Activated naive CD4-positive, alpha-beta T cell treated with anti-CD3 and anti-CD28 coated beads for 36 hours (primary cell): ENCODE measurements at regions of chr5 and their contacts with region 1.

Region 1: GRCh38 chr5:53303105-53303504 is 177.3 kb upstream of the FST start:
- DNase-seq: peak; percentile 22
- H3K4me3 Mint-ChIP-seq: no peak overlapping the region
- H3K27ac Mint-ChIP-seq: no peak overlapping the region
- H3K4me1 Mint-ChIP-seq: peaks cover 14% of the 10 kb centered on the region
- H3K27me3 Mint-ChIP-seq: peaks cover 18% of the 10 kb centered on the region

Region 2: GRCh38 chr5:53366245-53366644 is 63.1 kb after region 1 on chr5:
- CTCF ChIA-PET with region 1: no interaction called
- intact Hi-C with region 1: loop called (anchors 1 kb)
- DNase-seq: no peak
- H3K4me3 Mint-ChIP-seq: no peak overlapping the region
- H3K27ac Mint-ChIP-seq: peak overlapping the region; percentile 30
- H3K4me1 Mint-ChIP-seq: peaks cover 4% of the 10 kb centered on the region
- H3K27me3 Mint-ChIP-seq: peaks cover 11% of the 10 kb centered on the region